ENCODE measurements at regions of chr12 and their contacts with region 1.

Region 1: GRCh38 chr12:1720494-1720893 is 29.6 kb downstream of the ADIPOR2 start:
- DNase-seq: no peak
- ATAC-seq: no peak
- H3K4me3 ChIP-seq: no peak overlapping the region
- H3K27ac ChIP-seq: no peak overlapping the region
- H3K4me1 ChIP-seq: peaks cover 12% of the 10 kb centered on the region
- H3K27me3 ChIP-seq: no peaks in the 10 kb centered on the region
- CTCF ChIP-seq: no peak

Region 2: GRCh38 chr12:1644534-1645438 is 75.7 kb before region 1 on chr12:
- CTCF ChIA-PET with region 1: interaction called, 12 read pairs
- POLR2A ChIA-PET with region 1: no interaction called
- intact Hi-C with region 1: no loop called
- DNase-seq: no peak
- ATAC-seq: no peak
- H3K4me3 ChIP-seq: no peak overlapping the region
- H3K27ac ChIP-seq: no peak overlapping the region
- H3K4me1 ChIP-seq: peaks cover 11% of the 10 kb centered on the region
- H3K27me3 ChIP-seq: no peaks in the 10 kb centered on the region
- CTCF ChIP-seq: no peak

Region 3: GRCh38 chr12:1740161-1740948 is 19.9 kb after region 1 on chr12:
- CTCF ChIA-PET with region 1: no interaction called
- POLR2A ChIA-PET with region 1: no interaction called
- intact Hi-C with region 1: no loop called
- DNase-seq: peak; percentile 10
- ATAC-seq: peak; percentile 37; the same call in 1 of the 2 replicates
- H3K4me3 ChIP-seq: no peak overlapping the region
- H3K27ac ChIP-seq: peak overlapping the region; percentile 12; the same call in 1 of the 2 replicates
- H3K4me1 ChIP-seq: peaks cover 8% of the 10 kb centered on the region; the same call in 1 of the 2 replicates
- H3K27me3 ChIP-seq: no peaks in the 10 kb centered on the region
- CTCF ChIP-seq: no peak

Measured in PC-3 (cell line).